ENCODE measurements at regions of chr2 and their contacts with region 1.

Region 1: GRCh38 chr2:214960677-214961076 is 151.2 kb upstream of the BARD1 start:
- DNase-seq: no peak
- H3K4me3 ChIP-seq: no peak overlapping the region
- H3K27ac ChIP-seq: no peak overlapping the region
- H3K4me1 ChIP-seq: no peaks in the 10 kb centered on the region
- H3K27me3 ChIP-seq: no peaks in the 10 kb centered on the region
- CTCF ChIP-seq: peak; percentile 73

Region 2: DNA sequence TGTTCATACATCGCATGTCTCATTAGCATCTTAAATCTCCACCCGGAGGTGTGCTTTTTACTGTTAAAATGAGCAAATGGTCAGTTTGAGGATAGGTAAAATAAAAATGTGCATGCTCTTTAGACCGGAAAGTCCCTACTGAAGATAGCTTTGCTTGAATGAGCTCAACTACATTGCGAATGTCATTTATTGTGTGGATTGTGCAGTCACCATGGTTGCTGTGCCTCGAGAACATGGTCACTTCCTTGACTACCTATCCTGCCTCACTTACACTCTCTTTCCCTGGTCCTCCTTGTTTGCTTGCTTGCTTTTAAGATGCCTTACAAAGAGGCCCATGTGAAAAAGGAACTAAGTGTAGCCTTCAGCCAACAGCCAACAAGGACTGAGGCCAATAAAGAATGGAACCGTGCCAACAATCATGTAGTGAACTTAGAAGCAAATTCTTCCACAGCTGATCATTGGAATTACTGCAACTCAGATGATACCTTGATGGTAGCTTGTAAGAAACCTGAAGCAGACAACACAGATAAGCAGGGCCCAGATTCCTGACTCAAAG is 79.0 kb before region 1 on chr2:
- CTCF ChIA-PET with region 1: no interaction called
- POLR2A ChIA-PET with region 1: no interaction called
- intact Hi-C with region 1: no loop called
- DNase-seq: no peak
- H3K4me3 ChIP-seq: no peak overlapping the region
- H3K27ac ChIP-seq: no peak overlapping the region
- H3K4me1 ChIP-seq: no peaks in the 10 kb centered on the region
- H3K27me3 ChIP-seq: no peaks in the 10 kb centered on the region
- CTCF ChIP-seq: no peak

Region 3: DNA sequence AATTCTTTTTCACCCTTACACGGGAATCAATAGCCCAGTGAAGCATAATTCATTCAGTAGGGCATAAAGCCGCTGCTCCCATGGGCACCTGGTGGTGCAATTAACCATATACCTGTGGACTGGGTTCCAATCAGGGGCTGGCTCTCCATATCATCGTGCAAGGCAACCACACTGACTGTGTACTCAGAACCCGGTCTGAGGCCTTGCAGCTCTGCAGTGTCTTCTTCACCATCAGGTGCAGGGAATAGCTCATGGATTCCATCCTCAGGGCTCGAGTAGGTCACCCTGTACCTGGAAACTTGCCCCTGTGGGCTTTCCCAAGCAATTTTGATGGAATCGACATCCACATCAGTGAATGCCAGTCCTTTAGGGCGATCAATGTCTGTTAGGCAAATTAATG is 420.0 kb after region 1 on chr2:
- CTCF ChIA-PET with region 1: no interaction called
- POLR2A ChIA-PET with region 1: no interaction called
- intact Hi-C with region 1: no loop called
- DNase-seq: no peak
- H3K4me3 ChIP-seq: no peak overlapping the region
- H3K27ac ChIP-seq: no peak overlapping the region
- H3K4me1 ChIP-seq: no peaks in the 10 kb centered on the region
- H3K27me3 ChIP-seq: no peaks in the 10 kb centered on the region
- CTCF ChIP-seq: no peak

Region 4: DNA sequence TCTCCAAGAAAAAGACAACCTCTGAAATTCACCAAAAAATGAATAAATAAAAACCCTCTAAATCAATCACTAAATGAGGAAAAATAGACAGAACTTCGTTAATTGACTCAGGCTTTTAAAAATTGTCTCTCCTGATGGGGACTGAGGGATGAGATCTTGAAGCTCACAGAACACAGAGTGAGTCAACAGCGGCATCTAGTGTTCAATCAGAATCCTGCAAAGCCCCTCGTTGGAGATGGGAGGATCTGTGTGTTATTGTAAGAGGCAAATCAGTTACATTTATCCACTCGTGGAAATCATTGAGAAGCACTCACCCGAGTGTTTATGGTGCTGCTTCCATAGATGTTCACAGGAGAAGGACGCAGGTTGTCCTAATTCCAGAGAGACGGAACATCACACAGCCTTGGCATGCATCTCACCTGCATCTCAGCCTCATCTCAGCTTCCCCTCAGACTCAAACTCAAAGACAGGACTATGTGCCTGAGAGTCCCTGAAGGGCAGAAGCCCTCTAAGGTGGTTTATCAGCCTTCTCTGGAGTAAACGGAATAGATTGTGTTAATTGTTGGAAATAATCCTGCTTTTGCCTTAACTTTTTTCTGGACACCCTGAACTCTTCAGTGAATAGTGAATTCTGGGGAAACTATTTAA is 970.7 kb after region 1 on chr2:
- CTCF ChIA-PET with region 1: no interaction called
- POLR2A ChIA-PET with region 1: interaction called, 5 read pairs
- intact Hi-C with region 1: loop called (anchors 5 kb)
- DNase-seq: peak; percentile 60 to 74
- H3K4me3 ChIP-seq: peak overlapping the region; percentile 46; the same call in 1 of the 2 replicates
- H3K27ac ChIP-seq: peak overlapping the region; percentile 82
- H3K4me1 ChIP-seq: peaks cover 30% of the 10 kb centered on the region
- H3K27me3 ChIP-seq: no peaks in the 10 kb centered on the region
- CTCF ChIP-seq: peak; percentile 100

Measured in PC-9 (cell line).